ENCODE measurements at regions of chr15 and their contacts with region 1.

Region 1: DNA sequence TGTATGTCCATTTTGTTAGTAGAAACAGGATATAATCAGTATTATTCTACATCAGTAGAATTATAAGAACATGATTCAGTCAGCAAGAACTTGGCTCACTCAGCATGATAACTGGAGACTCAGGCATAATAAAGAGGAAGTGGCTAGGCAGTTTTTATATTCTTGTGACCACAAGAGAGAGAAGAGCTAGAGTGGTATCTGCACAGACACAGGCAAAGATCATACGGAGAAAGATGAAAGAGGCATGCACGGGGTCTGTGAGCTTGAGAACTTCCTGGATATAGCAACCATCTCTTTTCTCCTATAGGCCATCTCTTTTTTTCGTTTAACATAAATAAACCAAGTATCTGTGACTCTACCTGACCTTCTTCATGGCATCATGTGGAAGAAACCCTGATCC is 46.8 kb downstream of the MYO5A start:
- DNase-seq: peak; percentile 65
- H3K4me3 Mint-ChIP-seq: peak overlapping the region; percentile 11
- H3K27ac Mint-ChIP-seq: peak overlapping the region; percentile 67
- H3K4me1 Mint-ChIP-seq: peaks cover 64% of the 10 kb centered on the region
- H3K27me3 Mint-ChIP-seq: no peaks in the 10 kb centered on the region

Region 2: DNA sequence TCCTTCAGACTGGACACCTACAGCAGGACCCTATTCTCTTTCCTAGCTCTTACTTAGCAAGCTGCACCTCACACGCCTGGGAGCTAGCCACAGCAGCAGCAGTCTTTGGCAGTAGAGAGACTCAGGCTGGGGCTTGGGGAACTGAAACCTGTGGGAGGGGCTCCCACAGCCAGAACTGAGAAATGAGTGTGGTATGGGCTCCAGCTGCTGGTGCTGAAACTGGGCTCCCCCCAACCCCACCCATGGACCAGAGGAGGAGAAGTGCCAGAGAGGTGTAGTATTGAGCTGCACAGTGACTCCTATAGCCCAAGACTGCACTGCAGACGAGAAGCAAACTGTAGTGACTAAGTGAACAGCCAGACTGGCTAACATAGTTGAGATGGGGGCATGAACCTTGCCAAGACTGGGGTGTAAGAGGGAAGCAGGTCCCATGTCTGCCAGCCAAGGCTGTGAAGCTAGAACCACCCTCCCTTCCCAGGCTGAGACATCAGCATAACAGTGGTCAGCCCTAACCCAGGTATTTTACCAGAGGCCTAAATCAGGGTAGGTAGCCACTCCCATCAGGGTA is 15.7 kb before region 1 on chr15:
- CTCF ChIA-PET with region 1: interaction called, 32 read pairs
- POLR2A ChIA-PET with region 1: interaction called, 30 read pairs
- DNase-seq: peak; percentile 67
- H3K4me3 Mint-ChIP-seq: no peak overlapping the region
- H3K27ac Mint-ChIP-seq: peak overlapping the region; percentile 52
- H3K4me1 Mint-ChIP-seq: peaks cover 50% of the 10 kb centered on the region
- H3K27me3 Mint-ChIP-seq: no peaks in the 10 kb centered on the region